Right lobe of liver (tissue), 6 donors: ENCODE measurements at regions of chr16 and their contacts with region 1.

Region 1: GRCh38 chr16:27179500-27180072 is 23.7 kb upstream of the KDM8 start:
- DNase-seq: peak; percentile 88 to 91 (median 91)
- ATAC-seq: peak; percentile 98 to 99 (median 99)
- H3K4me3 ChIP-seq: no peak overlapping the region
- H3K27ac ChIP-seq: peak overlapping the region in 1 of 3 donors; percentile 7
- H3K4me1 ChIP-seq: peaks cover 0 to 8% (median 2%) of the 10 kb centered on the region in 4 donors
- H3K27me3 ChIP-seq: no peaks in the 10 kb centered on the region
- CTCF ChIP-seq: peak; percentile 95 to 99 (median 98)
- POLR2A ChIP-seq: no peak

Region 2: GRCh38 chr16:27222249-27223225 is 43.0 kb after region 1 on chr16:
- intact Hi-C with region 1: loop called in 1 of 2 experiments (anchors 10 kb)
- DNase-seq: peak in 2 of 3 donors; percentile 78 to 80
- ATAC-seq: peak; percentile 55 to 65 (median 60)
- H3K4me3 ChIP-seq: peak overlapping the region in 1 of 3 donors; percentile 5
- H3K27ac ChIP-seq: peak overlapping the region; percentile 43 to 75 (median 49)
- H3K4me1 ChIP-seq: peaks cover 0 to 30% (median 15%) of the 10 kb centered on the region in 4 donors
- H3K27me3 ChIP-seq: no peaks in the 10 kb centered on the region
- CTCF ChIP-seq: no peak
- POLR2A ChIP-seq: peak; percentile 3

Region 3: GRCh38 chr16:27374804-27375425 is 195.3 kb after region 1 on chr16:
- intact Hi-C with region 1: loop called in 1 of 2 experiments (anchors 10 kb)
- DNase-seq: peak in 2 of 3 donors; percentile 59 to 61
- ATAC-seq: peak; percentile 72 to 84 (median 82)
- H3K4me3 ChIP-seq: peak overlapping the region in 1 of 3 donors; percentile 22
- H3K27ac ChIP-seq: peak overlapping the region in 1 of 3 donors; percentile 18
- H3K4me1 ChIP-seq: no peaks in the 10 kb centered on the region
- H3K27me3 ChIP-seq: no peaks in the 10 kb centered on the region
- CTCF ChIP-seq: peak; percentile 28 to 37 (median 33)
- POLR2A ChIP-seq: no peak